ENCODE measurements at regions of chr6 and their contacts with region 1.

Region 1: GRCh38 chr6:113970805-113971676 is at the start of gene HDAC2:
- DNase-seq: peak; percentile 79
- H3K4me3 Mint-ChIP-seq: peak within 1 kb of the TSS; percentile 92
- H3K27ac Mint-ChIP-seq: peak within 1 kb of the TSS; percentile 97
- H3K4me1 Mint-ChIP-seq: peaks cover 29% of the 10 kb centered on the region
- H3K27me3 Mint-ChIP-seq: no peaks in the 10 kb centered on the region
- CTCF ChIP-seq: no peak
- total RNA-seq, gene HDAC2: 105 and 118 TPM in 2 replicates

Region 2: GRCh38 chr6:113980937-113981554 is 10.0 kb after region 1 on chr6:
- CTCF ChIA-PET with region 1: interaction called, 10 read pairs
- POLR2A ChIA-PET with region 1: interaction called, 4 read pairs
- intact Hi-C with region 1: no loop called
- DNase-seq: peak; percentile 25
- H3K4me3 Mint-ChIP-seq: no peak overlapping the region
- H3K27ac Mint-ChIP-seq: no peak overlapping the region
- H3K4me1 Mint-ChIP-seq: no peaks in the 10 kb centered on the region
- H3K27me3 Mint-ChIP-seq: no peaks in the 10 kb centered on the region
- CTCF ChIP-seq: peak; percentile 49

Region 3: GRCh38 chr6:115485400-115485799 is 1514.4 kb after region 1 on chr6:
- CTCF ChIA-PET with region 1: no interaction called
- POLR2A ChIA-PET with region 1: no interaction called
- intact Hi-C with region 1: no loop called
- DNase-seq: no peak
- H3K4me3 Mint-ChIP-seq: no peak overlapping the region
- H3K27ac Mint-ChIP-seq: no peak overlapping the region
- H3K4me1 Mint-ChIP-seq: no peaks in the 10 kb centered on the region
- H3K27me3 Mint-ChIP-seq: peaks cover 14% of the 10 kb centered on the region
- CTCF ChIP-seq: no peak